Mammary epithelial cell (primary cell): ENCODE measurements at regions of chr3 and their contacts with region 1.

Region 1: DNA sequence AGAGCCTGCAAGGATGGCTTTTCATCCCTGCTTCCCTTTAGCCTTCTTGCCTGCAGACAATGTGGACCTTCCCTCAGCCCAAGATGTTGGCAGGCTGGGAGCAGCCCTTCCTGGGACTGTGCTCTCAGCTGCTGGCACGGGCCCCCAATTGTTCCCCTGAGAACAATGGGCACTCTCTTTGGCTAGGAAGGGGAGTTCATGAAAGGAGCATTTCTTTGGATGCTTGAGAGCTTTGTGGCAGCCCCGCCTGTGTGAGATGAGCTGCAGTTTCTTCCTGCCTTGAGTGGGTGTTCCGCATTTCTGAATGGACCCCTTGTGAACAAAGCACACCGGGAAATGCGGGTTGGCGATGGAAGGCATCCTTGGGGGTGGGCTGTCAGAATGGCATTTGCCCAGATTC is 35.0 kb upstream of the BSN start:
- DNase-seq: peak; percentile 19
- H3K4me3 ChIP-seq: no peak overlapping the region
- H3K27ac ChIP-seq: no peak overlapping the region
- H3K4me1 ChIP-seq: peaks cover 33% of the 10 kb centered on the region
- H3K27me3 ChIP-seq: no peaks in the 10 kb centered on the region
- CTCF ChIP-seq: no peak

Region 2: DNA sequence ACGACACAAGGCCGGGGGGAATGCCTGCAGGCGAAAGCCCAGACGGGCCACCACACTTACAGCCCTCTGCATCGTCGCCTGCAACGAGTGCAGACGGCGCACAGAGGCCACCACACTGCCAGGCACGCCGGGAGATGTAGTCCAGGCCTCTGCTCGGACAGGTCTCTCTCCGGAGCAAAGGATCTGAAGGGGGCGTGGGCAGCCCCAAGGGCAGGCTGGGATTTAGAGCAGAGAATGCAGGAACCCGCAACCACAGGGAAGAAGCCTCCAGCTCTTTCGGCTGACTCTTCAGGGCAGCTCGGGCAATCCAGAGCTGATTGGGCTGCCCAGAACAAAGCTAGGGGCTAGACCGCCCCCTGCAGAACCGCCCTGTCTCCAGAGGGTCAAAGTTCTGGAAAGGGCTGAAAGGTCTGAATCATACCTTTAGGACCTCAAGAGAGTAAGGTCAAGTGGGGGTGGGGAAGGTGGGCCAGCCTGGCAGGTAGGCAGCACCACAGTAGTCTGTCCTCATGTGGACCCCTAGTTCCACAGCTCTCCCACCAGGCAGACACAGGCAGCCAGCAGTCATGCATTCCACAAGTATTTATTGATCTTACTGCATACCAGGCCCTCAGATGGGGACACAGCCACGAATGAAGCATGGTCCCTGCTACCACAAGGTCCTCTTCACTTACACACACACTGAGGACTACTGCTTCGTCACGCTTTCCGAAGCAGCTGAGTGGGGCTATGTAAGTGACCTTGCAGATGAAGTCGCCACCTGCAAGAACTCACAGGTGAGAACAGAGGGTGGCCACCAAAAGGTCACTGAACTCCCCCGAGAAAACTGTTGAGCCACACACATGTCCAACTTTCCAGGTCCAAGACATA is 96.7 kb before region 1 on chr3 and contains the start of gene AMT:
- CTCF ChIA-PET with region 1: no interaction called
- dilution Hi-C with region 1: loop called (anchors 5 kb)
- in situ Hi-C with region 1: no loop called
- intact Hi-C with region 1: no loop called
- DNase-seq: no peak
- H3K4me3 ChIP-seq: no peak within 1 kb of the TSS
- H3K27ac ChIP-seq: no peak within 1 kb of the TSS
- H3K4me1 ChIP-seq: peaks cover 21% of the 10 kb centered on the region
- H3K27me3 ChIP-seq: no peaks in the 10 kb centered on the region
- CTCF ChIP-seq: no peak
- total RNA-seq, gene AMT: 1.2 to 3.8 TPM

Region 3: DNA sequence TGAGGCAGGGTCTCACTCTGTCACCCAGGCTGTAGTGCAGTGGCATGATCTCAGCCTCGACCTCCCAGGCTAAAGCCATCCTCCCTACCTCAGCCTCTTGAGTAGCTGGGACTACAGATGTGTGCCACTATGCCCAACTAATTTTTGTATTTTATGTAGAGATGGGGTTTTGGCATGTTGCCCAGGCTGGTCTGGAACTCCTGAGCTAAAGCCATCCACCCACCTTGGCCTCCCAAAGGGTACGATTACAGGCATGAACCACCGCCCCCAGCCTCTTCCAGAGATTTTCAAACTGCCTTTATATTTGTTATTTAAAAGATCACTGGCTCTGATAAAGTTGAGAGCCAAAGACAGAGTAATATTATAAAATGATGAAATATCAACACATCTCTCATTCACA is 72.3 kb after region 1 on chr3:
- CTCF ChIA-PET with region 1: no interaction called
- dilution Hi-C with region 1: no loop called
- in situ Hi-C with region 1: no loop called
- intact Hi-C with region 1: no loop called
- DNase-seq: no peak
- H3K4me3 ChIP-seq: no peak overlapping the region
- H3K27ac ChIP-seq: no peak overlapping the region
- H3K4me1 ChIP-seq: no peaks in the 10 kb centered on the region
- H3K27me3 ChIP-seq: no peaks in the 10 kb centered on the region
- CTCF ChIP-seq: no peak